HEK293 (cell line): ENCODE measurements at regions of chr2 and their contacts with region 1.

Region 1: GRCh38 chr2:38835015-38835601 is 40.6 kb downstream of the DHX57 start:
- H3K4me3 ChIP-seq: no peak overlapping the region
- H3K27ac ChIP-seq: no peak overlapping the region
- H3K4me1 ChIP-seq: no peaks in the 10 kb centered on the region
- CTCF ChIP-seq: no peak

Region 2: GRCh38 chr2:38818565-38818964 is 16.5 kb before region 1 on chr2:
- CTCF ChIA-PET with region 1: interaction called, 19 read pairs
- POLR2A ChIA-PET with region 1: no interaction called
- H3K4me3 ChIP-seq: no peak overlapping the region
- H3K27ac ChIP-seq: no peak overlapping the region
- H3K4me1 ChIP-seq: no peaks in the 10 kb centered on the region
- CTCF ChIP-seq: no peak

Region 3: DNA sequence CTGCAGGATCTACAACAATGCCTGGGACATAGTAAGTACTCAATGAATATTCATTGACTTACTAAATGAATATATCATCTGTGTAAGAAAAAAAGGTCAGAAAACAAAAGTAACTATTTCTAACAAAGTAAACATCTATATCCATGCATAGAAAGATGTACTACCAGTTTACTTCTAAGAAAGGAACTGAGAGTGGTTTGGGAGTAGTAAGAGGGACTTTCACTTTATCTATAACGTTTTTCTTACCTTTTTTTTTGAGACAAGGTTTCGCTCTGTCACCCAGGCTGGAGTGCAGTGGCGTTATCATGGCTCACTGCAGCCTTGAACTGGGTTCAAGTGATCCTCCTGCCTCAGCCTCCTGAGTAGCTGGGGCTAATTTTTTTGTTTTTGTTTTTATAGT is 14.9 kb after region 1 on chr2:
- CTCF ChIA-PET with region 1: interaction called, 11 read pairs
- POLR2A ChIA-PET with region 1: no interaction called
- H3K4me3 ChIP-seq: no peak overlapping the region
- H3K27ac ChIP-seq: no peak overlapping the region
- H3K4me1 ChIP-seq: no peaks in the 10 kb centered on the region
- CTCF ChIP-seq: no peak